B cell (primary cell): ENCODE measurements at regions of chr6 and their contacts with region 1.

Region 1: GRCh38 chr6:127737009-127737486 is 160.1 kb downstream of the C6orf58 start:
- DNase-seq: peak; percentile 54
- ATAC-seq: no peak
- H3K4me3 ChIP-seq: no peak overlapping the region
- H3K4me3 Mint-ChIP-seq: no peak overlapping the region
- H3K27ac ChIP-seq: no peak overlapping the region
- H3K27ac Mint-ChIP-seq: no peak overlapping the region
- H3K4me1 ChIP-seq: no peaks in the 10 kb centered on the region
- H3K4me1 Mint-ChIP-seq: no peaks in the 10 kb centered on the region
- H3K27me3 ChIP-seq: no peaks in the 10 kb centered on the region
- H3K27me3 Mint-ChIP-seq: peaks cover 7% of the 10 kb centered on the region
- CTCF ChIP-seq: peak; percentile 79

Region 2: DNA sequence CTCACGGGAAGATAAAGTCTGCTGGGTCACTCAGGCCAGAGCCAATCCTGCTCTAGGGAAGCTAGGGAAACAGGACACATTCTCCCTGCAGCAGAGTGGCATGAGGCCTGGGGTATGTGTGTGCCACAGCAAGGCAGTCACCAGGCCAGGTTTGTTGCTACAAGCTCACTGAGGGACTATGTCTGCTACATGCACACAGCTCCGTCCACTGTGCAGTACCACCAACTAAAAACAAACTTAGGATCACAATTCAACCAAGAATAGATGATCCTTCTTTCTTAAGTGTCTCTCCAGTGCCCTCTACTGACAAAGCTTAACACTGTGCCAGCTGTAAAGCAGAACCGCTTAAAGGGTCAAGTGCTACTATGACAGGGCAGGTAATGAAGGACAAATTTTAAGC is 590.8 kb after region 1 on chr6:
- CTCF ChIA-PET with region 1: interaction called, 27 read pairs
- POLR2A ChIA-PET with region 1: no interaction called
- intact Hi-C with region 1: no loop called
- DNase-seq: peak; percentile 49
- ATAC-seq: no peak
- H3K4me3 ChIP-seq: no peak overlapping the region
- H3K4me3 Mint-ChIP-seq: no peak overlapping the region
- H3K27ac ChIP-seq: no peak overlapping the region
- H3K27ac Mint-ChIP-seq: no peak overlapping the region
- H3K4me1 ChIP-seq: no peaks in the 10 kb centered on the region
- H3K4me1 Mint-ChIP-seq: no peaks in the 10 kb centered on the region
- H3K27me3 ChIP-seq: no peaks in the 10 kb centered on the region
- H3K27me3 Mint-ChIP-seq: no peaks in the 10 kb centered on the region
- CTCF ChIP-seq: peak; percentile 62